Naive thymus-derived CD4-positive, alpha-beta T cell (primary cell): ENCODE measurements at regions of chr12 and their contacts with region 1.

Region 1: DNA sequence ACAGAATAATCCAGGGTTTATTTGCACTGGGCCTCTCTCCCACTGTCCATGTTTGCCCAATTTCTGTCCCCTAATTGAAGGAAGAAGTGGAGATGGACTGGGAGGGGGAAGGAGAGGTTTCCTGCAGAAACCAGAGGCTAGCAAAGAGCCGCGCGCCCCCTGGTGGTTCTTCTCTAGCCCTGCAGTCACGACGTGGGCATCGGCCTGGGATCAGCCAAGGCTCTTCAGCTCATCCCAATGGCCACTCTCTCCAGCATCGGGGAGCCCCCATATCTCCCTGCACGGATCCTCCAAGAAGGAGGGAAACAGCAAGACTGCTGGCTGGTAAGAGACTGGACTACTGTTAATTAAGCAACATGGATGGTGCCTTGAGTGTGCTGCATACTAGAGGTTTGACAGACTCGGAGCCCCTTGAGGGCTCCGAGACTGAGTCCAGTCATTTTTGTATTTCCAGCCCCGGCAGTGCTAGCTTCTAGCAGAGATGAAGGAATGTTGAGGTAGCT is 18.7 kb downstream of the ZBTB39 start:
- DNase-seq: peak; percentile 51 to 77 (median 66)
- ATAC-seq: peak; percentile 89
- H3K4me3 ChIP-seq: no peak overlapping the region
- H3K4me3 Mint-ChIP-seq: peak overlapping the region in 6 of 10 donors; percentile 45 to 72 (median 56)
- H3K27ac ChIP-seq: no peak overlapping the region
- H3K27ac Mint-ChIP-seq: peak overlapping the region in 1 of 9 donors; percentile 21
- H3K4me1 ChIP-seq: peaks cover 0 to 7% of the 10 kb centered on the region in 2 donors
- H3K4me1 Mint-ChIP-seq: peaks cover 9 to 31% (median 23%) of the 10 kb centered on the region in 7 donors
- H3K27me3 ChIP-seq: no peaks in the 10 kb centered on the region
- H3K27me3 Mint-ChIP-seq: peaks cover 0 to 6% (median 0%) of the 10 kb centered on the region in 5 donors

Region 2: DNA sequence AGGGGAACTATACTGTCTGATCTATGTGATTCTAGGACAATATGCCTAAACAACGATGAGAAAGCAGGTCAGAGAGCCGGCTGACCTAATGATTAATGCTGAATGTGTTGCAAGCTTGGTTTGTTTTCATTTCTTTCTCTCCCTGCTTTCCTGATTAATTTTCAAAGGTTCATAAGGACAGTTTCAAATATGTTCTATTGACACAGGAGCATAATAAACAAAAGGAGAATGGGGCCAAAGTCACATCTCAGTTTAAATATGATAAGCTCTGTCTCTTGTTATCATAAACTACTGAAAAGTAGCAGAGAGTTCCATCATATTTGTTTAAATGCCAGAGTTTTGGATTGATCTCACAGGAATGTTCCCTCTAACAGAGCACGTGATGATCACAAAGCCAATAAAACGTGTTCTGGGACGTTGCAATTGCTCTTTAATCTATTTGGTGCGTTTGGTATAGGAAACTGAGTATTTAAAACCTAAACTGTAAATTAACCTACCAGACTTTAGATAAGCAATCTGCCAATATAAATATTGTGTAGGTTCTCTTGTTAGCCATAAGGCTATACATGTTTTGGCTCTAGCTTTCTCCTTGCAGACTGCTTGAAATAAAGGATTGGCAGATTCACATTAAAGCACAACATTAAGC is 228.2 kb before region 1 on chr12:
- CTCF ChIA-PET with region 1: interaction called, 44 read pairs
- POLR2A ChIA-PET with region 1: no interaction called
- intact Hi-C with region 1: loop called in 1 of 2 experiments (anchors 1 kb)
- DNase-seq: no peak
- ATAC-seq: no peak
- H3K4me3 ChIP-seq: no peak overlapping the region
- H3K4me3 Mint-ChIP-seq: no peak overlapping the region
- H3K27ac ChIP-seq: no peak overlapping the region
- H3K27ac Mint-ChIP-seq: no peak overlapping the region
- H3K4me1 ChIP-seq: no peaks in the 10 kb centered on the region
- H3K4me1 Mint-ChIP-seq: peaks cover 0 to 8% (median 6%) of the 10 kb centered on the region in 7 donors
- H3K27me3 ChIP-seq: no peaks in the 10 kb centered on the region
- H3K27me3 Mint-ChIP-seq: peaks cover 0 to 8% (median 4%) of the 10 kb centered on the region in 5 donors

Region 3: DNA sequence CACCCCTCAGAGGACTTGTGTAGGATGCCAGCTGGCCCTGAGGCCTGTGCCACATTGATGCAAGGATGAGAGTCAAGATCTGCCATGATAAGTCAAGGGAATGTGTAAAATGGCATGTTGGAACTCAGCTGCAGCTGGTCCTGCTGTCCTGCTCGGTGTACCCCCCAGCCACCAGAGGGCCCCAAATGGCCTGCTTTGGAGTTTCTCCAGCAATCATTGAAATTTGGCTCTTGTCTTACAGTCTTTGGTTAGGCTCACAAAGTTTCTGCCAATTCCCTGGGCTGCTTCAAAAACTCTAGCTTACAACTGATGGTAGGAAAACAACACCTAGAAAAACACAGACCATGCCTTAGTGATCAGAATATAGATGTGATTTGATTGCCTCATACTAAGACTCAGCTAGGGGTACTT is 147.7 kb before region 1 on chr12:
- CTCF ChIA-PET with region 1: interaction called, 6 read pairs
- POLR2A ChIA-PET with region 1: no interaction called
- intact Hi-C with region 1: loop called (anchors 1 kb)
- DNase-seq: peak in 4 of 9 donors; percentile 12 to 35 (median 16)
- ATAC-seq: no peak
- H3K4me3 ChIP-seq: no peak overlapping the region
- H3K4me3 Mint-ChIP-seq: no peak overlapping the region
- H3K27ac ChIP-seq: no peak overlapping the region
- H3K27ac Mint-ChIP-seq: no peak overlapping the region
- H3K4me1 ChIP-seq: peaks cover 6 to 10% of the 10 kb centered on the region in 2 donors
- H3K4me1 Mint-ChIP-seq: peaks cover 10 to 21% (median 17%) of the 10 kb centered on the region in 7 donors
- H3K27me3 ChIP-seq: no peaks in the 10 kb centered on the region
- H3K27me3 Mint-ChIP-seq: peaks cover 0 to 13% (median 0%) of the 10 kb centered on the region in 5 donors

Region 4: GRCh38 chr12:57078519-57079404 is 91.2 kb after region 1 on chr12 and contains the start of gene NEMP1:
- CTCF ChIA-PET with region 1: no interaction called
- POLR2A ChIA-PET with region 1: no interaction called
- intact Hi-C with region 1: no loop called
- DNase-seq: peak; percentile 65 to 99 (median 98)
- ATAC-seq: peak; percentile 98
- H3K4me3 ChIP-seq: peak within 1 kb of the TSS; percentile 84
- H3K4me3 Mint-ChIP-seq: peak within 1 kb of the TSS; percentile 86 to 99 (median 94)
- H3K27ac ChIP-seq: peak within 1 kb of the TSS; percentile 85
- H3K27ac Mint-ChIP-seq: peak within 1 kb of the TSS; percentile 89 to 99 (median 92)
- H3K4me1 ChIP-seq: peaks cover 6 to 7% of the 10 kb centered on the region in 2 donors
- H3K4me1 Mint-ChIP-seq: peaks cover 0 to 49% (median 25%) of the 10 kb centered on the region in 7 donors
- H3K27me3 ChIP-seq: no peaks in the 10 kb centered on the region
- H3K27me3 Mint-ChIP-seq: no peaks in the 10 kb centered on the region
- total RNA-seq, gene NEMP1: 13.1 to 47.6 (median 29.3) TPM